ENCODE measurements at regions of chr2 and their contacts with region 1.

Region 1: GRCh38 chr2:64330281-64331113 is 123.5 kb upstream of the LGALSL start:
- DNase-seq: peak; percentile 52
- CTCF ChIP-seq: peak; percentile 95

Region 2: GRCh38 chr2:64214281-64215115 is 116.0 kb before region 1 on chr2:
- CTCF ChIA-PET with region 1: interaction called, 13 read pairs
- POLR2A ChIA-PET with region 1: interaction called, 7 read pairs
- DNase-seq: peak; percentile 53
- CTCF ChIP-seq: no peak

Region 3: GRCh38 chr2:64311948-64312621 is 18.4 kb before region 1 on chr2:
- CTCF ChIA-PET with region 1: interaction called, 38 read pairs
- POLR2A ChIA-PET with region 1: no interaction called
- DNase-seq: no peak
- CTCF ChIP-seq: no peak

Region 4: GRCh38 chr2:64359892-64360657 is 29.6 kb after region 1 on chr2:
- CTCF ChIA-PET with region 1: interaction called, 20 read pairs
- POLR2A ChIA-PET with region 1: no interaction called
- DNase-seq: peak; percentile 54
- CTCF ChIP-seq: no peak

Region 5: GRCh38 chr2:64493788-64494187 is 163.3 kb after region 1 on chr2:
- CTCF ChIA-PET with region 1: interaction called, 312 read pairs
- POLR2A ChIA-PET with region 1: no interaction called
- DNase-seq: no peak
- CTCF ChIP-seq: no peak

Region 6: DNA sequence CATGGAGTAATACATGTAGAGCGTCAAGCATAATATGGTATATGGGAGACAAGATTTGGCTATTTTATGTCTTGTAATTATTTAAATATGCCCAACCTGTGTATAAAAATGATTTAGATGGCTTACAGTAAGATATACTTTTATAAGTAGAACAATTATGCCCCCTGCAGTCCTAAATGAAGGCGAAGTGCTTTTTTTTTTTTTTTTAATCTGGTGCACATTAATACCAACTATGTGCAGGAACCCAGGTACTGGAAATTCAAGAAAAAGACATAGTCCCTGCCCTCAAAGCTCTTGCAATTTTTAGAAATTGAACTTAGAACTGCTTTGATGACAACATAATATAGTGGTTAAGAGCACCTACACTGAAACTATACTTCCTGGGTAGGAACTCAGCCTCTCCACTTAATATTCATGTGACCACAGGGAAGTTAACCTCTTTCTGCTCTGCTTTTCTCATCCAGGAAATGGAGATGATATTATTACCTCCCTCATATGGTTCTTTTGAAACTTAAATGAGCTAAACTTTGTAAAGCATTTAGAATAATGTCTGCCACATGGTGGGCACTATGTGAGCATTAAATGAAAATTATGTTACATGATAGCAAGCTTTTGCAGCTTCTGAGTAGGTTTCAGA is 231.8 kb after region 1 on chr2:
- CTCF ChIA-PET with region 1: interaction called, 71 read pairs
- POLR2A ChIA-PET with region 1: no interaction called
- DNase-seq: no peak
- CTCF ChIP-seq: peak; percentile 36

Measured in GM10248 (cell line).